Lower leg skin (tissue), 4 donors: ENCODE measurements at regions of chr14 and their contacts with region 1.

Region 1: GRCh38 chr14:20697273-20698017 is 8.9 kb downstream of the ANG start:
- DNase-seq: peak in 1 of 2 donors; percentile 50
- H3K4me3 ChIP-seq: no peak overlapping the region
- CTCF ChIP-seq: no peak
- POLR2A ChIP-seq: no peak

Region 2: DNA sequence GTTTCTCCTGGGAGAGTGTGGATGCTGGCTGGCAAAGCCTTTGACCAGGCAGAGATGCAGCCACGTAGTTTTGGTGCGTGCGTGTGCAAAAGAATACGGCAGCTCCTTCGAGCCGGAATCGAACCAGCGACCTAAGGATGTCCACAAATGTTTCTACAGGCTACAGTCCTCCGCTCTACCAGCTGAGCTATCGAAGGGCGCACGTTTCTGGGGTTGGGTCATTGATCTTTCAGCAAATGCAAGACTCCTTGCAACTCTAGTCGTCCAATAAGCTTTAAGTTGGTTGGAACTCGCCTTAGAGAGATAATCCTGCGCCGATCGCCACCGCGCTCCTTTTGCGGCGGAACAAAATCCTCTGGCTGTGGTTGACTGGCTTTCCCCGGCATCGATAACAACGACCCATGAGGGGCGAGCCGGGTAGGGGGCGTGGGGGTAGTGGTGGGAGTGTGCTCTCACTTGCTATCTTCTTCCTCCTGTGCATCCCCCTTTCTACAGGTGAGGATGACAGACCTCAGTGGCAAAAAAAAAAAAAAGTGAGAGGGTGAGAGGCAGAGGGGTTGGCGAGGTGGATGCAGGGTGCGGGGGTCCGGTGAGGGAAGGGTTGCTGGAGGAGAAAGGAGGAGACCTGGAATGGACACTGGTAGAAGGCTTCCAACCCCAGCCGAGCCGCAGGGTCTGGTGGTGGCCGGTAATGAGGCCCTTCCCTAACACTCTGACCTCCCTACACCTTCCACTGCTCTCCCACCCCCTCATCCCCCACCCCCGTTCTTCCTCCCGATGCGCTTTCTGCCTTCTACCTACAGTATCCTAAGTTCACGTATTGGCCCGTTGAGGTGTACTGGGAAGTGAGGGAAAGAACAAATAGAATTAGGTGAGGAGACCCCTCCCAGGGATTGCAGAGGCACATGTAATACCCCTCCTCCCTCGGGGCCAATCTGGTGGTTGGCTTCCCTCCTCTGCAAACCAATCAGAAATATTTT is 44.2 kb before region 1 on chr14:
- intact Hi-C with region 1: no loop called
- DNase-seq: no peak
- H3K4me3 ChIP-seq: no peak overlapping the region
- CTCF ChIP-seq: no peak
- POLR2A ChIP-seq: no peak

Region 3: GRCh38 chr14:20679907-20680306 is 17.5 kb before region 1 on chr14:
- intact Hi-C with region 1: no loop called
- DNase-seq: peak in 1 of 2 donors; percentile 39
- H3K4me3 ChIP-seq: no peak overlapping the region
- CTCF ChIP-seq: no peak
- POLR2A ChIP-seq: no peak

Region 4: GRCh38 chr14:20855652-20856291 is 158.3 kb after region 1 on chr14:
- intact Hi-C with region 1: loop called (anchors 5 kb)
- DNase-seq: peak in 1 of 2 donors; percentile 45
- H3K4me3 ChIP-seq: no peak overlapping the region
- CTCF ChIP-seq: no peak
- POLR2A ChIP-seq: no peak

Region 5: DNA sequence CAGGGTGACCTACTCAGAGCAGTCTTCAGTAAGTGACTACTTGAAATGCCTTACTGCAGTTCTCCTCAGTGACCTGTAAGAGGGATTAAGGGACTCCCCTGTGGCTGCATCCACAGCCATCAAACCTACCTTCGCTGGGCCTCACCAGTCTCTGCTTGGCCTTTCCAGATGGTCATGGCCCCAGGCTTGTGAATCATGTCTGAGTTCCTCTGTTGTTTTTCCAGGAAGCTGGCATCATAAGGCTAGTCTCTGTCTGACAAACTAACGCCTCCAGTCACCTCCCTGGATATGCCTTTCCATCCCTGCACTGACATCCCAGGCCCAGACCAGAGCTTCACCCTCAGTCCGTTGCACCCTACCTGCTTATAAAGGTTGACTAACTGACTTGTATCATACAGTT is 271.9 kb after region 1 on chr14:
- intact Hi-C with region 1: loop called (anchors 5 kb)
- DNase-seq: no peak
- H3K4me3 ChIP-seq: no peak overlapping the region
- CTCF ChIP-seq: no peak
- POLR2A ChIP-seq: no peak